ENCODE measurements at regions of chr20 and their contacts with region 1.

Region 1: GRCh38 chr20:35883778-35884540 is 70.3 kb downstream of the SCAND1 start:
- DNase-seq: peak; percentile 54
- H3K4me3 ChIP-seq: no peak overlapping the region
- H3K27ac ChIP-seq: peak overlapping the region; percentile 31 to 40
- H3K4me1 ChIP-seq: no peaks in the 10 kb centered on the region
- H3K27me3 ChIP-seq: no peaks in the 10 kb centered on the region
- CTCF ChIP-seq: peak; percentile 17 to 75 (median 68)
- POLR2A ChIP-seq: no peak

Region 2: GRCh38 chr20:35463455-35464300 is 420.3 kb before region 1 on chr20:
- intact Hi-C with region 1: loop called (anchors 10 kb)
- DNase-seq: peak; percentile 61
- H3K4me3 ChIP-seq: no peak overlapping the region
- H3K27ac ChIP-seq: no peak overlapping the region
- H3K4me1 ChIP-seq: no peaks in the 10 kb centered on the region
- H3K27me3 ChIP-seq: no peaks in the 10 kb centered on the region
- CTCF ChIP-seq: peak; percentile 24 to 78 (median 72)
- POLR2A ChIP-seq: no peak

Region 3: GRCh38 chr20:35601008-35601973 is 282.7 kb before region 1 on chr20:
- intact Hi-C with region 1: loop called (anchors 5 kb)
- DNase-seq: peak; percentile 63
- H3K4me3 ChIP-seq: peak overlapping the region; percentile 27 to 42
- H3K27ac ChIP-seq: no peak overlapping the region
- H3K4me1 ChIP-seq: no peaks in the 10 kb centered on the region
- H3K27me3 ChIP-seq: no peaks in the 10 kb centered on the region
- CTCF ChIP-seq: peak in 3 of 4 experiments; percentile 32 to 68 (median 57)
- POLR2A ChIP-seq: no peak

Region 4: GRCh38 chr20:35619196-35620095 is 264.5 kb before region 1 on chr20:
- intact Hi-C with region 1: loop called (anchors 5 kb)
- DNase-seq: peak; percentile 66
- H3K4me3 ChIP-seq: peak overlapping the region; percentile 29 to 36
- H3K27ac ChIP-seq: peak overlapping the region in 1 of 2 donors; percentile 10
- H3K4me1 ChIP-seq: peaks cover 9% of the 10 kb centered on the region
- H3K27me3 ChIP-seq: no peaks in the 10 kb centered on the region
- CTCF ChIP-seq: peak in 2 of 4 experiments; percentile 6 to 13
- POLR2A ChIP-seq: peak; percentile 45

Region 5: DNA sequence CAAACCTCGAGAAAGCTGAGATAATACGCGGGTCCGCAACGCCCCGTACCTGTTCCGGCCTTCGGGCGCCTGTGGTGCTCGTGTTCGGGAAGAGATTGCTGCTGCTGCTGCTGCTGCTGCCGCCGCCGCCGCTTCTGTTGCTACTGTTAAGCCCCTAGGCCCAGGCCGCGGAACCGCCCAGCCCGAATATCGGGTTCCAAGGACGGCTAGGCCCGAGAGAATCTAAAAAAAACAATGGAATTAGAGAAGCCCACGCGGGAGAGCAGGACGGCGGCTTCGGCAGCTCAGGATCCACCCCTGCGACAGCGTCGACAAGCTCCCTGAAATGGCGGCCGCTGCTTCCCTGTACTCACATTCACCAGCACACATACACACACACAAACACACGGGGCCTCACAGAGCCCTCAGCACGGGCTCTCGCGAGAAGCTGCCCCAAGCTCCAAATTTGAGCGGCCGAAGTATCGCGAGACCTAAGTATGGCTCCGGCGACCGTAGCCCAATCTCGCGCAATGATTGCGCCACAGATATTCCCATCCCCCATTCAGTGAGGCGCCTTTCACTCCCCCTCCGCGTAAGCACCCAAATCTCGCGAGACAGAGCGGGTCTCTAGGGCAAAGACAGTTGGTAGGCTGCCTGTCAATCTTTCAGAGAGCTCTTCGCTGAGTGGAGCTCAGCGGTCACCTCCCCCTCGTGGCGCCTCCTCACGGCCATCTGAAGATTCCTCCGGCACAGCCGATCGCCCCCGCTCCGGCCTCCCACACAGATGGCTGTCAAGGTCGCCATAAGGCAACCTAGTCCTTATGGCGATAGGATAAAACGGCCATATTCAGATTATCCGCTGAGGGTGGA is 141.8 kb before region 1 on chr20 and contains the start of gene RBM39:
- intact Hi-C with region 1: loop called (anchors 5 kb)
- DNase-seq: peak; percentile 100
- H3K4me3 ChIP-seq: peak within 1 kb of the TSS; percentile 71 to 79
- H3K27ac ChIP-seq: peak within 1 kb of the TSS; percentile 98 to 99
- H3K4me1 ChIP-seq: peaks cover 6% of the 10 kb centered on the region
- H3K27me3 ChIP-seq: no peaks in the 10 kb centered on the region
- CTCF ChIP-seq: peak; percentile 41 to 84 (median 59)
- POLR2A ChIP-seq: peak; percentile 88
- total RNA-seq, gene RBM39: 228 to 235 TPM